ENCODE measurements at regions of chr9 and their contacts with region 1.

Region 1: GRCh38 chr9:91150998-91151717 is 210.6 kb downstream of the AUH start:
- DNase-seq: peak; percentile 65
- H3K4me3 Mint-ChIP-seq: peak overlapping the region; percentile 48
- H3K27ac Mint-ChIP-seq: peak overlapping the region; percentile 91
- H3K4me1 Mint-ChIP-seq: peaks cover 94% of the 10 kb centered on the region
- H3K27me3 Mint-ChIP-seq: no peaks in the 10 kb centered on the region

Region 2: DNA sequence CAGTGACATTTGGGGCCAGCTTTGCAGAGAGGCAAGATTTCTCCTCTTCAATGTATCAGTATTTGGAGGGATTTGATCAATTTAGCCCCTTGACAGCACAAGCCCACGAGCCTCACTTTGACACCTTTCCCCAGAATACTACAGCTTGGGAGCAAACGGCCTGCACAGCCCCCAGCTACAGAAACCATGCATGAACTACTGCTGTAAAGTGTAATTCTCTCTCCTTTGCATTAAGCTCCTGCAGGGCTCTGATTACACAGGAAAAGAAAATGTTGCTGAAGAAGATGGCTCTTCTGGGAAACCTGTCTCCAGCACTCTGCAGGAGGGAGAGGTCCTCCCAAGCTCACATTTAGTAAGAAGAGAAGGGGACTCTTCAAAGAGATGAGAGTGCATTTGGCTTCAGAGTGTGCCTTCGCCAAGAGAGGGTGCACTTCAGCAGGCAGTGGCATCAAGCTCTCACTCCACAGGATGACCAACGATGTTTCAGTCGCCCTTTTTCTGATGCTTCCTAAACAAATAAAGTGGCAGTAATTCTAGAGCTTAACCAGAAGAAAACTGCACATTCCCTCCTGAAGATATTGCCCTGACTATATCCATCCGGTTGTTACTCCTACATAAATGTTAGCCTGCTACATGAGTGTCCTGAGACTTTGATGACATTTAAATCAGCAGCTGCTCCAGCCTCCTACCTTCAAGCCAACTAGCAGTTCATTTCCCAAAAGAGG is 61.6 kb before region 1 on chr9:
- CTCF ChIA-PET with region 1: interaction called, 4 read pairs
- POLR2A ChIA-PET with region 1: interaction called, 12 read pairs
- DNase-seq: peak; percentile 33
- H3K4me3 Mint-ChIP-seq: no peak overlapping the region
- H3K27ac Mint-ChIP-seq: peak overlapping the region; percentile 16
- H3K4me1 Mint-ChIP-seq: peaks cover 48% of the 10 kb centered on the region
- H3K27me3 Mint-ChIP-seq: no peaks in the 10 kb centered on the region

Region 3: DNA sequence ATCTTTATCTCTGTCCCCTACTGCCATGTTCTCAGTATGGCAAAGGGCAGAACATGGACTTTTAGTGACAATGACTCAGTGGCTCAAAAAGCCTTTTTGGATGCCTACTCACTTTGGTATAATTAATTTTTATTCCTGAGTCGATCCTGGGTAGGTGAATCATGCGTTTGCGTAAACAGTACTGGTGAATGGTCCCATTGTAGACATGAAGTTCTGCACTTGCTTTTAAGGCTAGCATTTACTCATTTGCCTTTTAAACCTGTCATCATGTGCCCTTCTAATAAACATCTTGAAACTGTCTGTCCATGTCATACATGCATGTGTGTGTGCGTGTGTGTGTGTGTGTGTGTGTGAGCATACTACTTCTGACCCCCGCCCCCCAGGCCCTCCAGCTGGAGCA is 12.4 kb before region 1 on chr9:
- CTCF ChIA-PET with region 1: interaction called, 15 read pairs
- POLR2A ChIA-PET with region 1: interaction called, 216 read pairs
- DNase-seq: no peak
- H3K4me3 Mint-ChIP-seq: no peak overlapping the region
- H3K27ac Mint-ChIP-seq: no peak overlapping the region
- H3K4me1 Mint-ChIP-seq: peaks cover 63% of the 10 kb centered on the region
- H3K27me3 Mint-ChIP-seq: no peaks in the 10 kb centered on the region

Region 4: GRCh38 chr9:91186518-91187108 is 35.5 kb after region 1 on chr9:
- CTCF ChIA-PET with region 1: interaction called, 11 read pairs
- POLR2A ChIA-PET with region 1: interaction called, 126 read pairs
- DNase-seq: peak; percentile 38
- H3K4me3 Mint-ChIP-seq: no peak overlapping the region
- H3K27ac Mint-ChIP-seq: peak overlapping the region; percentile 72
- H3K4me1 Mint-ChIP-seq: peaks cover 42% of the 10 kb centered on the region
- H3K27me3 Mint-ChIP-seq: no peaks in the 10 kb centered on the region

Region 5: DNA sequence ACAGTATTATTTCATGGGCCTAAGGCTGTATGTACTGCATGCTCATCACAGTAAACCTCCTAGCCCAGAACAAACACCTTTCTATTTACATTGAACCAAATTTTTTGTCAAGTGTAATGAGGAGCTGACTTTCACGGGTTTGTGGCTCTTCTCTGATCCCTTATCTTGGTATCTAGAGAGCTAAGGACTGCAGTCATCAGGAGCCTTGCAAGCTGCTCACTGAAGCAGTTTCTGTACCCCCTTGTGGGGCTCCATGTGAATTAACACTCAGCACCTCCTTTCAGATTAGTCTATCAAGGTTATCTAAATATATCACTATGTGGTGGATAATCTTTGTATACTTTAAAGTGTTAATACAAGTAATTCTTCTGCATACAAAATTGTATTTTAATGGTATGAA is 102.3 kb after region 1 on chr9:
- CTCF ChIA-PET with region 1: interaction called, 14 read pairs
- POLR2A ChIA-PET with region 1: interaction called, 17 read pairs
- DNase-seq: peak; percentile 66
- H3K4me3 Mint-ChIP-seq: no peak overlapping the region
- H3K27ac Mint-ChIP-seq: no peak overlapping the region
- H3K4me1 Mint-ChIP-seq: peaks cover 56% of the 10 kb centered on the region
- H3K27me3 Mint-ChIP-seq: no peaks in the 10 kb centered on the region